ENCODE measurements at regions of chrX and their contacts with region 1.

Region 1: GRCh38 chrX:23782863-23783568 is at the start of gene SAT1:
- DNase-seq: peak; percentile 95 to 98 (median 96)
- ATAC-seq: peak; percentile 93 to 98 (median 96)
- H3K4me3 ChIP-seq: peak within 1 kb of the TSS; percentile 41 to 97 (median 76)
- H3K27ac ChIP-seq: peak within 1 kb of the TSS; percentile 83 to 97 (median 92)
- H3K4me1 ChIP-seq: peaks cover 0 to 13% (median 0%) of the 10 kb centered on the region in 12 donors
- H3K27me3 ChIP-seq: no peaks in the 10 kb centered on the region
- CTCF ChIP-seq: peak; percentile 65 to 83 (median 76)
- POLR2A ChIP-seq: peak; percentile 87 to 98
- total RNA-seq, gene SAT1: 67.0 to 373 (median 154) TPM

Region 2: GRCh38 chrX:23503835-23504542 is 279.0 kb before region 1 on chrX:
- intact Hi-C with region 1: no loop called
- DNase-seq: peak; percentile 47 to 83 (median 71)
- ATAC-seq: peak; percentile 86 to 98 (median 94)
- H3K4me3 ChIP-seq: no peak overlapping the region
- H3K27ac ChIP-seq: peak overlapping the region in 1 of 12 donors; percentile 52
- H3K4me1 ChIP-seq: no peaks in the 10 kb centered on the region
- H3K27me3 ChIP-seq: peaks cover 0 to 7% (median 0%) of the 10 kb centered on the region in 9 donors
- CTCF ChIP-seq: no peak
- POLR2A ChIP-seq: no peak

Region 3: DNA sequence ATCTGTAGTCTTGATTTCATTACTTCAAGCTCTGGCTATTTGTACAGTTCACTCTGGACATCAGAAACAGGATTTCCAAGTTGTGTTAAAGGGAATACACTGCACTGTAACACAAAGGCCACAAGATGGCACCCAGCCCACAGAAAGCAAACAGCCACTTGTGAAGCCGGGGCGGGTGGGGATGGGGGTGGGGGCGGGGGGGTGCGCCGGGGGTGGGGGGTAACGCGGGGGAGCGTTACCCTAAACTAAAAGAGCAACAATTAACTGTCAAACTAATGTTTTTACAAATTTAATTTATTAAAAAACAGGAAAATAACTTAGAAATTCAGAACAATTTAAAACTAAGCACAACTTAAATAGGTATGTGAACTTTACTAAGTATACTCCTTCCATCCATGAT is 88.4 kb before region 1 on chrX:
- intact Hi-C with region 1: loop called in 1 of 10 experiments (anchors 5 kb)
- DNase-seq: peak in 3 of 5 donors; percentile 44 to 73 (median 50)
- ATAC-seq: peak in 3 of 4 donors; percentile 56 to 75 (median 73)
- H3K4me3 ChIP-seq: no peak overlapping the region
- H3K27ac ChIP-seq: no peak overlapping the region
- H3K4me1 ChIP-seq: no peaks in the 10 kb centered on the region
- H3K27me3 ChIP-seq: peaks cover 0 to 2% (median 0%) of the 10 kb centered on the region in 9 donors
- CTCF ChIP-seq: peak; percentile 21 to 57 (median 42)
- POLR2A ChIP-seq: no peak

Region 4: GRCh38 chrX:23742697-23743622 is 40.1 kb before region 1 on chrX and contains the start of gene ACOT9:
- intact Hi-C with region 1: loop called in 2 of 10 experiments (anchors 2 to 5 kb)
- DNase-seq: peak; percentile 90 to 97 (median 94)
- ATAC-seq: peak; percentile 97 to 99 (median 98)
- H3K4me3 ChIP-seq: peak within 1 kb of the TSS; percentile 61 to 98 (median 79)
- H3K27ac ChIP-seq: peak within 1 kb of the TSS; percentile 92 to 100 (median 94)
- H3K4me1 ChIP-seq: peaks cover 0 to 15% (median 4%) of the 10 kb centered on the region in 12 donors
- H3K27me3 ChIP-seq: peaks cover 0 to 2% (median 0%) of the 10 kb centered on the region in 9 donors
- CTCF ChIP-seq: no peak
- POLR2A ChIP-seq: peak; percentile 16 to 78
- total RNA-seq, gene ACOT9: 45.3 to 81.1 (median 59.3) TPM

Region 5: GRCh38 chrX:23756157-23756559 is 26.9 kb before region 1 on chrX:
- intact Hi-C with region 1: loop called in 1 of 10 experiments (anchors 2 kb)
- DNase-seq: peak in 4 of 5 donors; percentile 39 to 62 (median 47)
- ATAC-seq: peak in 1 of 4 donors; percentile 13
- H3K4me3 ChIP-seq: no peak overlapping the region
- H3K27ac ChIP-seq: no peak overlapping the region
- H3K4me1 ChIP-seq: peaks cover 0 to 11% (median 0%) of the 10 kb centered on the region in 12 donors
- H3K27me3 ChIP-seq: no peaks in the 10 kb centered on the region
- CTCF ChIP-seq: peak in 11 of 12 donors; percentile 31 to 65 (median 52)
- POLR2A ChIP-seq: no peak

Region 6: GRCh38 chrX:23901805-23902204 is 118.8 kb after region 1 on chrX:
- intact Hi-C with region 1: loop called (anchors 1 to 5 kb)
- DNase-seq: peak in 3 of 5 donors; percentile 40 to 49 (median 44)
- ATAC-seq: peak; percentile 82 to 91 (median 88)
- H3K4me3 ChIP-seq: peak overlapping the region in 7 of 12 donors; percentile 12 to 52 (median 36)
- H3K27ac ChIP-seq: peak overlapping the region in 11 of 12 donors; percentile 46 to 77 (median 68)
- H3K4me1 ChIP-seq: peaks cover 0 to 54% (median 17%) of the 10 kb centered on the region in 12 donors
- H3K27me3 ChIP-seq: peaks cover 0 to 9% (median 0%) of the 10 kb centered on the region in 9 donors
- CTCF ChIP-seq: peak; percentile 14 to 59 (median 42)
- POLR2A ChIP-seq: no peak

Region 7: DNA sequence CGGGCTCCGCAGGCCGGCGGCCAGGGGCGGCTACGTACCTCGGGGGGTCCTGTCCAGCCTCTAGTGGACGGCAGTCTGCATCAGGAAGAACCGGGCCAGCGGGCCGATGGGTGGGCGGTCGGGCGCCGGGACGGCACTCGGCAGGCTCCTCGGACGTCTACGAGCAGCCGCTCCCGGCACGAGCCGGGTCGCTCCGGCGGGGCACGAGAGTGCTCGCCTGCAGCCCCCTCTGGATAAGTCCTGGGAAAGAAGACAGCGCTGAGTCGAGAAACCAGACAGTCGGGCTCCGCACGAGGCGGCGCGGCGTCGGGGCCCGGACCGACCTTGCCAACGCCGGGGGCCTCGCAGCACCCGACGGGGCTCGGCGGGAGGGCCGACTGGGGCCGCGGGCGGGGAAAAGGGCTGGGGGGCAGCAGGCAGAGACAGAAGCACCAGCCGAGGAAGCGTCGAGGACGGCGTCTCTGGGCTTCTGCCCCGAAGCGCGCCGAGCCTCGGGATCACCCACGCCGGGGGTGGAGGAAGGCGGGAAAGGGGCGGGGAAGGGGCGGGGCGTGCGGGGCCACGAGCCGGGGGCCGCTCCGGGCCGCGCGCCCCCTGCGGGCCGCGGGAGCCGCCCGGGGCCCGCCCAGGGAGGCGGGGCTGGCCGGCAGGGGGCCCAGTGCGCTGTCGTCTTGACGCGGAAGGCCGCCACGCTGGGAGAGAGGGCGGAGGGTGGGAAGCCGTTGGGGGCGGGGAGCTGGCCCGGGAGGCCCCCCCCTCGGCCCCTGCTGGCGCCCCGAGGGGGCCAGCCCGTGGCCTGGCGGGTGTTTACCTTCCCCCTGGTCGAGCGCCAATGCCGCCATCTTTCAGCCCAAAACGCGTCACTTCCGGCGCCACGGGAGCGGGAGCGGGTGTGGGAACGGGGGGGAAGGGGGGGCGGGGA is 242.1 kb after region 1 on chrX:
- intact Hi-C with region 1: loop called in 1 of 10 experiments (anchors 10 kb)
- DNase-seq: peak; percentile 89 to 93 (median 91)
- ATAC-seq: peak; percentile 93 to 97 (median 96)
- H3K4me3 ChIP-seq: peak overlapping the region; percentile 51 to 99 (median 82)
- H3K27ac ChIP-seq: peak overlapping the region; percentile 90 to 97 (median 96)
- H3K4me1 ChIP-seq: peaks cover 0 to 13% (median under 1%) of the 10 kb centered on the region in 12 donors
- H3K27me3 ChIP-seq: peaks cover 0 to 46% (median 0%) of the 10 kb centered on the region in 9 donors
- CTCF ChIP-seq: peak in 6 of 12 donors; percentile 19 to 40 (median 30)
- POLR2A ChIP-seq: peak in 1 of 2 donors; percentile 84

Region 8: DNA sequence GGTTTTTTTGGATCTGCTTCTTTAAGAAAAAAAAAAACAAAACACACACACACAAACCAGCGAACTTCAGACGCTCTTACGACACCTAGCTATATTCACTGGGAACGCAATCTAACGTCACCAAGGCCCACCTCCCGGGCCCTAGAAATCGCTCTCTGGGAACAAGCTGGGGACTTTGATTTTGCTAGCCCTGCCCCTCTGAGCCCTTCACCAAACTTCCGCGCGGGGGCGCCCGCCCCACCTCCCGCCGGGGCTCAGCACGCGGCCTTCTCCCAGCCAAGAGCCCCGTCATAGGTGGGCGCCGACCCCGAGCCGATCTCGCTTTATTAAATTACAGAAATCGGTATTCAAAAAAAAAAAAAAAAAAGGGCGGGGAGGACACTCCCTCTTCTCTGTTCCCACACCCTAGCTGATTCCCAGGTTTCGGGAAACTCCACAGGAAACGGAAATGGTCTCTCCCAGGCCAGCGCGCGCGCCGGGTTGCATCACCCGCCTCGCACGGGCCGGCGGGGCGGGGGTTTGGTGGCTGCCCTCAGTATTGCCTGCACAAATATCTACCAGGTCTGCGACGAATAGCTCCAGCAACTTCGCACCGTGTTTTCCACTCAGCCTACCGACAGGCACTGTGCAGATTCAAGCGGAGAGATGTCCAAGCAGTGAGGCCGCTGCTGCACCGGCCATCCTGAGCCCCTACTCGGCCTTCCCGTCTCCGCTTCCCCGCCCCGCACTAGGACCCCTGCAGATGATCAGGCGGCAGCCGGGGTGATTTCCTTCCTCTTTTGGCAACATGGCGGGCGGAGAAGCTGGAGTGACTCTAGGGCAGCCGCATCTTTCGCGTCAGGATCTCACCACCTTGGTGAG is 271.4 kb after region 1 on chrX and contains the start of gene EIF2S3:
- intact Hi-C with region 1: loop called in 1 of 10 experiments (anchors 10 kb)
- DNase-seq: peak; percentile 86 to 93 (median 87)
- ATAC-seq: peak; percentile 97 to 99 (median 98)
- H3K4me3 ChIP-seq: peak within 1 kb of the TSS in 6 of 12 donors; percentile 57 to 86 (median 77)
- H3K27ac ChIP-seq: peak within 1 kb of the TSS; percentile 88 to 98 (median 93)
- H3K4me1 ChIP-seq: peaks cover 0 to 11% (median 0%) of the 10 kb centered on the region in 12 donors
- H3K27me3 ChIP-seq: peaks cover 0 to 5% (median 0%) of the 10 kb centered on the region in 9 donors
- CTCF ChIP-seq: peak; percentile 47 to 89 (median 72)
- POLR2A ChIP-seq: peak in 1 of 2 donors; percentile 13
- total RNA-seq, gene EIF2S3: 60.0 to 126 (median 83.0) TPM

Measured in heart left ventricle (tissue), 16 donors.